Naive thymus-derived CD4-positive, alpha-beta T cell (primary cell): ENCODE measurements at regions of chr12 and their contacts with region 1.

Region 1: GRCh38 chr12:109052414-109053323 is at the start of gene USP30:
- DNase-seq: peak; percentile 68 to 86 (median 77)
- ATAC-seq: peak; percentile 93
- H3K4me3 ChIP-seq: peak within 1 kb of the TSS; percentile 91
- H3K4me3 Mint-ChIP-seq: peak within 1 kb of the TSS; percentile 86 to 99 (median 96)
- H3K27ac ChIP-seq: peak within 1 kb of the TSS; percentile 89
- H3K27ac Mint-ChIP-seq: peak within 1 kb of the TSS; percentile 89 to 98 (median 95)
- H3K4me1 ChIP-seq: peaks cover 13% of the 10 kb centered on the region in 2 donors
- H3K4me1 Mint-ChIP-seq: peaks cover 14 to 27% (median 17%) of the 10 kb centered on the region in 7 donors
- H3K27me3 ChIP-seq: no peaks in the 10 kb centered on the region
- H3K27me3 Mint-ChIP-seq: no peaks in the 10 kb centered on the region
- total RNA-seq, gene USP30: 7.8 to 15.7 (median 12.9) TPM

Region 2: DNA sequence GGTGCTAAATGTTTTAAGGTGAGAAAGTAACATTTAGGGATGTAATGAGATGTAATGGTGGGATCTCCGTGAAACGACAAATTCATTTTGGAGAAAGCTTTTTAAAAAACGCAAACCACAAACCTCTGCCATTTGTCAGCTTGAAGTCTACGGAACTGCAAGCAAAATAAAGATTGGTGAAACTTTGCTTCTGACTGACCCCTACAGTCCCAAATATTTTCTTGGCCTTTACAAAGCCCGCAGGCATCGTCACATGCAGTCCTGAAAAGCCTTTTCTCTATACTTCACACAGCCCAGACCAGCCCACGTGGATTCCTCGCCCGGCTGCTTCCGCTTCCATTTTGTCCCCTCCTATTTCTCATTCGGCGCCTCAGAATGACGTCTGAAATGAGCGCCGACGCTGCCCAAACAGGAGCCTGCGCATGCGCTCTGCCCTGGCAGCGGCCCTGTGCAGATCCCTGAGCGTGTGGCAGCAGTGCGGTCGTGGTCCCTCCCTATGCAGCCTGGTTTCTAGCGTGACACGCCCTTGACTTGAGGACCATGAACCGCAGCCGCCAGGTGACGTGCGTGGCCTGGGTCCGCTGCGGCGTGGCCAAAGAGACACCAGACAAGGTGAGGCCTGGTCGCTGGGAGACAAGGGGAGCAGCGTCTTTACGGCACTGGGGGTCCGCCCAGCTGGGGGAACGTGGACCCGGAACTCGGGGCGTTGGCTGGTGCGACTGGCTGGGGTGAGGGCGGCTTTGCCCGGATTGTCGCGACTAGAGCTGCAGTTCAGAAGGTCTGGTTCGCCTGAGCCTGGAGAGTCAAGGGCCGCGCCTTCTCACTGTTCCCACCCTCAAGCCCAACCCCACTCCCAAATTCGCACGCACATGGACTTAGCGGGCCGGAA is 1367.1 kb before region 1 on chr12 and contains the start of gene PWP1:
- CTCF ChIA-PET with region 1: no interaction called
- POLR2A ChIA-PET with region 1: no interaction called
- intact Hi-C with region 1: loop called in 1 of 2 experiments (anchors 5 kb)
- DNase-seq: peak; percentile 93 to 97 (median 95)
- ATAC-seq: peak; percentile 93
- H3K4me3 ChIP-seq: peak within 1 kb of the TSS; percentile 78
- H3K4me3 Mint-ChIP-seq: peak within 1 kb of the TSS; percentile 90 to 99 (median 95)
- H3K27ac ChIP-seq: peak within 1 kb of the TSS; percentile 88
- H3K27ac Mint-ChIP-seq: peak within 1 kb of the TSS; percentile 90 to 99 (median 97)
- H3K4me1 ChIP-seq: peaks cover 12 to 19% of the 10 kb centered on the region in 2 donors
- H3K4me1 Mint-ChIP-seq: peaks cover 23 to 40% (median 35%) of the 10 kb centered on the region in 7 donors
- H3K27me3 ChIP-seq: no peaks in the 10 kb centered on the region
- H3K27me3 Mint-ChIP-seq: peaks cover 0 to 3% (median 0%) of the 10 kb centered on the region in 5 donors
- total RNA-seq, gene PWP1: 20.9 to 42.5 (median 25.7) TPM

Region 3: DNA sequence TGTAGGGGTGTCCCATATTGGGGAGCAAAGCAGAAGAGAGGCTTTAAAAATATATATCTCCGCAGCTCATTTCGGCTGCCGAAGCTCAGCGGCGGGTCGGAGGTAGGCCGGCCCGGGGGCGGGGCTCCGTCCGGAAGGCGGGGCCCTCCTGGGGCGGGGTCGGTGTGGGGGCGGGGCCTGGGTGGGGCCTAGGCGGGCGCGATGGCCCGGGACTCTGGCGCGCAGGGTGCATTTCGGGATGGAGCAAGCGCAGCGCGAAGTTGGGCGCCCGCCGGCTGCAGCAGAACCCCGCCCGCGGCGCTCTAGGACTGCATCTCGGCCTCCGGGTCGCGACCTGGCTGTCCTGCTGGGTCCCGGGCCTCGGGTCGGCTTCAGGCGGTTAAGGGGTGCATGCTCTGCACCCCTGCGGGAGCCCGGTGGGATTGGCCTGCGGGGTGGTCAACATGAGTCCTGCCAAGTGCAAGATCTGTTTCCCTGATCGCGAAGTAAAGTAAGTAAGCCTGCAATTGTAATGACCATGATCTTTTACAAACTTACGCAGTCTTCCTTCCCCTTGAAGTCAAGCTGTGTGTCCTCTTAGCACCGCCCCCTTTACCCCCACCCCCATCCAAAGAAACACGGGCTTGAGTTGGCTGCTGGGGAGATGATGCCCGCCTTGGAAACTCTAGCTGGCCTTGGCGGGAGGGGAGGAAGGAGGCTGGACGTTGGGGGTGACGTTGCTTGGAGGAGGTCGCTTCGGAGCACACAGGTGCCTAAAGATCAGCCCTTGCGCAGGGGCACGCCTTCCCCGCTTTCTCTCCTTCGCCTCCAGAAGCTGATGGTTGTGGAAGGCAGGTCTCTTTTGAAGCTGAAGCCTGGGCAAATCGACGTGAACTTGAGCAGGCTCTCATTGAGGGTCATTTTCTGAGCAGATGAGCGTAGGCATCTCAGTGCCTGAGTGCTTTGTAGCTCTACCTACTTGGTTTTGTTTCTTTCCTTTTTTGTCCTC is 102.1 kb after region 1 on chr12:
- CTCF ChIA-PET with region 1: no interaction called
- POLR2A ChIA-PET with region 1: no interaction called
- intact Hi-C with region 1: loop called (anchors 2 kb)
- DNase-seq: peak; percentile 58 to 87 (median 76)
- ATAC-seq: peak; percentile 99
- H3K4me3 ChIP-seq: peak overlapping the region; percentile 73
- H3K4me3 Mint-ChIP-seq: peak overlapping the region; percentile 85 to 98 (median 95)
- H3K27ac ChIP-seq: peak overlapping the region; percentile 61
- H3K27ac Mint-ChIP-seq: peak overlapping the region; percentile 71 to 95 (median 87)
- H3K4me1 ChIP-seq: peaks cover 5 to 10% of the 10 kb centered on the region in 2 donors
- H3K4me1 Mint-ChIP-seq: peaks cover 13 to 33% (median 19%) of the 10 kb centered on the region in 7 donors
- H3K27me3 ChIP-seq: no peaks in the 10 kb centered on the region
- H3K27me3 Mint-ChIP-seq: peaks cover 0 to 19% (median 0%) of the 10 kb centered on the region in 5 donors